Endothelial cell of umbilical vein (primary cell): ENCODE measurements at regions of chr11 and their contacts with region 1.

Region 1: GRCh38 chr11:396948-397548 is 3.0 kb downstream of the PKP3 start:
- DNase-seq: peak; percentile 66
- H3K4me3 ChIP-seq: peak overlapping the region; percentile 6 to 43 (median 35)
- H3K27ac ChIP-seq: no peak overlapping the region
- H3K4me1 ChIP-seq: peaks cover 2% of the 10 kb centered on the region
- H3K27me3 ChIP-seq: peaks cover 0 to 3% of the 10 kb centered on the region in 2 experiments
- CTCF ChIP-seq: peak; percentile 44 to 80
- POLR2A ChIP-seq: no peak

Region 2: DNA sequence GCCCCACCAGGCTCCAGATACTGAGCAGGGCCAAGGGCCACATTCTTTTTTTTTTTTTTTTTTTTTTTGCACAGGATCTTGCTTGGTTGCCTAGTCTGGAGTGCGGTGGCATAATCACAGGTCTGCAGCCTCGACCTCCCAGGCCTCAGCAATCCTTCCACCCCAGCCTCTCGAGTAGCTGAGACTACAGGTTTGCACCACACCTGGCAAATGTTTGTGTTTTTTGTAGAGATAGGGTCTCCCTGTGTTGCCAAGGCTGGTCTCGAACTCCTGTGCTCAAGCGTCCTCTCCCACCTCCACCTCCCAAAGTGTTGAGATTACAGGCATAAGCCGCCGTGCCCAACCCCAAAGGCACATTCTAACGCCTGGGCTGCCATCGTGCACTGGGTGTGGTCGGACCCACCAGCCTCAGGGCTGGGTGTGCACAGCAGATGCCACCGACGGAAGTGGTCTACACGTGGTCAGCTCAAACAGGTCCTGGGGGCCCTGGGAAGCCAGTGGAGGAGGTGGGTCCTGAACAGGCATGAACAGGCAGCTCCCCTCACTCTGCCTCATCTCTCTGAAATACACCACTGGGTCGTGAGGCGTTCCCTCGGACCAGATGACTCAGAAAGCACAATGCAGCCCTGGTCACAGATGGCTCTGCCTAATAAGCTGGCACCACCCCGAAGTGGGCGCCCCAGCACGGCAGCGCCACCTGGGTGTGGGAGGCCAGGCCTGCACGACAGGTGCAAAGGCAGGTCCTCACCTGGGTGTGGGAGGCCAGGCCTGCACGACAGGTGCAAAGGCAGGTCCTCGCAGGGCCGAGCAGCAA is 32.9 kb before region 1 on chr11:
- CTCF ChIA-PET with region 1: interaction called, 11 read pairs
- POLR2A ChIA-PET with region 1: no interaction called
- dilution Hi-C with region 1: no loop called
- intact Hi-C with region 1: no loop called
- DNase-seq: peak; percentile 37
- H3K4me3 ChIP-seq: no peak overlapping the region
- H3K27ac ChIP-seq: no peak overlapping the region
- H3K4me1 ChIP-seq: no peaks in the 10 kb centered on the region
- H3K27me3 ChIP-seq: peaks cover 13% of the 10 kb centered on the region in 2 experiments
- CTCF ChIP-seq: peak in 1 of 2 donors; percentile 61
- POLR2A ChIP-seq: no peak

Region 3: DNA sequence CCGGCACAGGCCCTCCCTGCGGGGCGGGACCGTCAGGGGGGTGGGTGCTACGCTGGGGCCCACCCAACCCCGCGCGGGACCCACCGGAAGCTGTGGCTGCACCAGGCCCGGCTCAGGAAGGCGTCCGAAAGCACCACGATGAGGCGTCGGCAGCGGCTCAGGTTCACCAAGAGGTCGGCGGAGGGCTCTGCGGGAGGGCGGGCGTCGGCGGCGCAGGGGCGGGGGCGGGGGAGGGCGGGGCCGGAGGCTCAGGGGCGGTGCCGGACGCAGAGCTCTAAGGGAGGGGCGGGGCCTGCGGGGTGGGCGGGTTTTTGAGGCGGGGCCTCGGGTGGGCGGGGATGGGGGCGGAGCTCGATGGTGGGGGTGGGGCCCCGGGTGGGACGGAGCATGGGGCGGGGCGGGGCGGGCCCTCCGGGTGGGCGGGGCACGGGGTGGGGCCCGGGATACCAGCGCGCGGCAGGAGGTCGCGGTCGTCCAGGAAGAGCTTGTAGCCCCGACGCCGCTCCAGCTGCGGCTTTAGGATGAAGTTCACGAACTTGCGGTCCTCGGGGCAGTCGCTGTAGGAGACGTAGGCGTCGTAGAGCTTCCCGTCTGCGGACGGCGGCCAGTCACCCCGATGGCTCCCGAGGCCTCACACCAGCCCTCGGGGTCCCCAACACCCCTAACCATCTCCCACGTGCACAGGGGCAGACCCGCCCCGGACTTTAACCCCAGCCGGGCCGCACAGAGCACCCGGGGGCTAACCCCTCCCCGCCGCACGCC is 10.1 kb after region 1 on chr11:
- CTCF ChIA-PET with region 1: interaction called, 25 read pairs
- POLR2A ChIA-PET with region 1: no interaction called
- dilution Hi-C with region 1: no loop called
- intact Hi-C with region 1: no loop called
- DNase-seq: peak; percentile 46
- H3K4me3 ChIP-seq: peak overlapping the region; percentile 42 to 51 (median 47)
- H3K27ac ChIP-seq: peak overlapping the region; percentile 38
- H3K4me1 ChIP-seq: peaks cover 5% of the 10 kb centered on the region
- H3K27me3 ChIP-seq: no peaks in the 10 kb centered on the region
- CTCF ChIP-seq: no peak
- POLR2A ChIP-seq: peak; percentile 23

Region 4: DNA sequence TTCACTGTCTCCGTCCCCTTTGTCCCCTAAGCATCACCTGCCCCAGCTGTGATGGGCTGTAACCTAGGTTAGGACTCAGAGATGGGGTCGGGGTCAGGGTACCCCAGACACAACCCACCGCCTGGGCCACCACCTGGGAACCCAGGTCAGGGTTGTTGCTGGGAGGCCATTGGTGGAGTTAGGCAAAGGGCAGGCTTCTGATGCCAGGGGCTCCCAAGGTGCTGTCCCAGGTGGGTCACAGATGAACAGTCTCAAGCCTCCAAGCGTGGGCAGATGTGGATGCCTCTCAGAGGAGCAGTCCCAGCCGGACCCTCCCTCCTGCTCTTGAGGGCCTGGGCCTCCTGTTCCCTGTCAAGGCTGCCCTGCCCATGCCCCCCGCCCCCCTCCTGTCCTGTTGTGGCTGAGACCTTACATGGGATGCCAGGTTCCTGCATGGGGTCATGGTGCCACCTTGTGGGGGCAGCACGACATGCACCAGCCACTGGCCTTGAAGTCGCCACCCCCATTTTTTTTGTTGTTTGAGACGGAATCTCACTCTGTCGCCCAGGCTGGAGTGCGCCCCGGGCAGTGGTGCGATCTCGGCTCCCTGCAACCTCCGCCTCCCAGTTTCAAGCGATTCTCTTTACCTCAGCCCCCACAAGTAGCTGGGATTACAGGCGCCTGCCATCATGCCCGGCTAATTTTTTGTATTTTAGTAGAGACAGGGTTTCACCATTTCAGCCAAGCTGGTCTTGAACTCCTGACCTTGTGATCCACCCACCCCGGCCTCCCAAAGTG is 368.2 kb after region 1 on chr11:
- CTCF ChIA-PET with region 1: no interaction called
- POLR2A ChIA-PET with region 1: no interaction called
- dilution Hi-C with region 1: no loop called
- intact Hi-C with region 1: no loop called
- DNase-seq: peak; percentile 53
- H3K4me3 ChIP-seq: no peak overlapping the region
- H3K27ac ChIP-seq: no peak overlapping the region
- H3K4me1 ChIP-seq: no peaks in the 10 kb centered on the region
- H3K27me3 ChIP-seq: no peaks in the 10 kb centered on the region
- CTCF ChIP-seq: peak; percentile 46 to 68
- POLR2A ChIP-seq: no peak